ENCODE measurements at regions of chr9 and their contacts with region 1.

Region 1: GRCh38 chr9:90142580-90142979 is 500.0 kb downstream of the DIRAS2 start:
- DNase-seq: no peak
- ATAC-seq: no peak
- H3K4me3 ChIP-seq: no peak overlapping the region
- H3K27ac ChIP-seq: no peak overlapping the region
- H3K4me1 ChIP-seq: no peaks in the 10 kb centered on the region
- H3K27me3 ChIP-seq: no peaks in the 10 kb centered on the region
- CTCF ChIP-seq: peak; percentile 56

Region 2: DNA sequence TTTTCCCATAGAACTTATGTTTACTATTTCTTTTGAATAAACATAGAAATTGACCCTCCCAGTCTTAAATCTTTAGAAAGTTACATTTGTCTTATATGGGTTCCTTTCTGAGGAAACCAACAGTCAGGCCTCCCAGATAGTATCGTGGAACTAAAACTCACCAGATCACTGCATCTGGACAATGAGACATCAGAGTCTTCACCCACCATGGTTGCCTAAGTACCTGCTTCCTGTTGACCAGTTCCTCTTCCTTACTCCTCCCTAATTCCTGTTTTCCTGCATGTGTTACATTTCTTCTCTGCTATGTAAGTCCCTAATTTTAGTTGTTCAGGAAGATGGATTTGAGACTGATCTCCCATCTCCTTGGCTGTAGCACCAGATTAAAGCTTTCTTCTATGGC is 37.8 kb after region 1 on chr9:
- CTCF ChIA-PET with region 1: no interaction called
- POLR2A ChIA-PET with region 1: no interaction called
- in situ Hi-C with region 1: no loop called
- intact Hi-C with region 1: no loop called
- DNase-seq: no peak
- ATAC-seq: no peak
- H3K4me3 ChIP-seq: no peak overlapping the region
- H3K27ac ChIP-seq: no peak overlapping the region
- H3K4me1 ChIP-seq: no peaks in the 10 kb centered on the region
- H3K27me3 ChIP-seq: no peaks in the 10 kb centered on the region
- CTCF ChIP-seq: no peak

Region 3: DNA sequence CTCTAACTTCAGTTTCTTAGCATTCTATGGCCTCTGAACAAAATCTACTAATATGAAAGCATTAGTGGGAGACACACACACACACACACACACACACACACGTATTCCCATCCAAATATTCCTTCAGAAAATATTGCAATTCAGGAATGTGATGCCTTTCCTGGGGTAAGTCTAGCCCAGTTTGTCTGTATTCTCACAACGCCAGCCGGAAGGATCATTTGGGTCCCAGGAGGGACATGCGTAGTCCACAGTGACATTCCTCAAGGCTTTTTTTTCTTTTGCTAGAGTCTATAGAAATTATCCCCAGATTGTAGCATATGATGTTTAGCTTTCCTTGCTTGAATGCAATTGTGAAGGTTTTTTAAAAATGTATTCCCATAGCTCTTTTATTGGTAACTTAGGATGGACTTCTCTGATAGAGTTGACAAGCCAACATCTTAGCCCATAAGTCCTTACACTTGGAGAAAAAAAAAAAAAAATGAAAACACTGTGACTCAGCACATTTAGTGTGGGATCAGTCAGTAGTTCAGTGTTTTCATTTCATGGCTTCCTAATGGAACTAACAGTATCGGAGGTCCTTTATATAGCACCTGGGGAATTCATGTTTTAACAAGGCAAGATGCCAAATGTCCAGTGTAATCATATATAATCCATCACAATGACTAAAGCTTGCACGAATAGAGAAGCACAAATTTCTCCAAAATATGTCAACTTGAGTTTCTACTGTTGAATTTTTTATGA is 183.5 kb after region 1 on chr9:
- CTCF ChIA-PET with region 1: no interaction called
- POLR2A ChIA-PET with region 1: no interaction called
- in situ Hi-C with region 1: no loop called
- intact Hi-C with region 1: no loop called
- DNase-seq: no peak
- ATAC-seq: no peak
- H3K4me3 ChIP-seq: no peak overlapping the region
- H3K27ac ChIP-seq: no peak overlapping the region
- H3K4me1 ChIP-seq: no peaks in the 10 kb centered on the region
- H3K27me3 ChIP-seq: no peaks in the 10 kb centered on the region
- CTCF ChIP-seq: no peak

Region 4: DNA sequence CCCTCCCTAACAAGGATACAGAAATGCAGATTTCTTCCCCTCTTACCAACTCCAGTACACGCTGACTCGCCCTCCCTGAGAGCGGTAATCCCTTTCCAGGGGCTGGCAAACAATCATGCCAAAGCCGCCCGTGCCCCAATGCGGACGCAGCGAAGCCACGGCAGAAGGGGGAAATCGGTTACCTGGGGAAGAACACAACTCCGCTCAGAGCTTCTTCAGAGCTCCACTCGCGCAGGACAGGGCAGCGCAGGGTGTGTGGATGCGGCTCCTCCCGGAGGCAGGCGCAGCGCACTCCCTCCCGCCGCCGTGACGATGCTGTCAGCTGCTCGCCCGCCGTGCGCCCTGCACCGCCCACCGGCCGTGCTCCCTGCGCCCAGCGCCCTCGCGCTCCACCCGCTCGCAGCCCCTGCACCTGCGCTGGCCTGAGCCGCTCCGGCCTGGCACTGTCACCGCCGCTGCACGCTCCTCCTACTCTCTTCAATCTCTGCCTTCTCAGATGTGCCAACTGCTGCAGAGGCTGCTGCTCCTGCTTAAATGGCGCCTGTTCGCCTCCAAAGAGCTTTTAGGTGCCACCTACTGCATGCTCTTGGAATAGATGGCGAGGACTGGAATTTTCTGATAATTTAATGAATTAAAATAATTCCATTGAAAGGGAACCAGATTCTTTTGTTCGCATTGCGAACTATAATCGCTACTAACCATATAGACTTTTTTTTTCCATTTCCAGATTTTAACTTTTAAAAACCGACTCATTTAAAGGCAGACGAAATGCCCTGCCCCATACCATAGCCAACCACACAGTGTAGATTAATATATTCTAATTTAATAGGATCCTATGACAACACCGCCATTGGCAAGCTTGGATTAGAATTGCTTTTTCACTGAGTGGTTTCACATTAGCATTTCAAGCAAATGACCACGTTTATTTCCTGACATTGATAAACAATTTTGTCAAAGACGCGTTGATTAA is 500.3 kb after region 1 on chr9 and contains the start of gene DIRAS2:
- CTCF ChIA-PET with region 1: no interaction called
- POLR2A ChIA-PET with region 1: no interaction called
- in situ Hi-C with region 1: no loop called
- intact Hi-C with region 1: loop called (anchors 10 kb)
- DNase-seq: no peak
- ATAC-seq: peak; percentile 93
- H3K4me3 ChIP-seq: peak within 1 kb of the TSS; percentile 33 to 47
- H3K27ac ChIP-seq: no peak within 1 kb of the TSS
- H3K4me1 ChIP-seq: no peaks in the 10 kb centered on the region
- H3K27me3 ChIP-seq: peaks cover 14% of the 10 kb centered on the region
- CTCF ChIP-seq: peak; percentile 52
- total RNA-seq, gene DIRAS2: 0.03 TPM

Region 5: GRCh38 chr9:90767523-90768100 is 625.0 kb after region 1 on chr9:
- CTCF ChIA-PET with region 1: no interaction called
- POLR2A ChIA-PET with region 1: no interaction called
- in situ Hi-C with region 1: no loop called
- intact Hi-C with region 1: loop called (anchors 10 kb)
- DNase-seq: no peak
- ATAC-seq: no peak
- H3K4me3 ChIP-seq: no peak overlapping the region
- H3K27ac ChIP-seq: no peak overlapping the region
- H3K4me1 ChIP-seq: no peaks in the 10 kb centered on the region
- H3K27me3 ChIP-seq: no peaks in the 10 kb centered on the region
- CTCF ChIP-seq: no peak

Region 6: GRCh38 chr9:90870621-90871326 is 728.2 kb after region 1 on chr9:
- CTCF ChIA-PET with region 1: no interaction called
- POLR2A ChIA-PET with region 1: no interaction called
- in situ Hi-C with region 1: no loop called
- intact Hi-C with region 1: loop called (anchors 10 kb)
- DNase-seq: peak; percentile 17
- ATAC-seq: no peak
- H3K4me3 ChIP-seq: no peak overlapping the region
- H3K27ac ChIP-seq: no peak overlapping the region
- H3K4me1 ChIP-seq: no peaks in the 10 kb centered on the region
- H3K27me3 ChIP-seq: no peaks in the 10 kb centered on the region
- CTCF ChIP-seq: peak; percentile 75; the same call in 1 of the 2 replicates

Measured in Panc1 (cell line).